Lower leg skin (tissue), 4 donors: ENCODE measurements at regions of chr9 and their contacts with region 1.

Region 1: GRCh38 chr9:98892288-98892687 is 51.4 kb upstream of the COL15A1 start:
- DNase-seq: no peak
- H3K4me3 ChIP-seq: no peak overlapping the region
- CTCF ChIP-seq: no peak
- POLR2A ChIP-seq: no peak

Region 2: GRCh38 chr9:98823666-98824334 is 68.5 kb before region 1 on chr9:
- intact Hi-C with region 1: loop called (anchors 2 kb)
- DNase-seq: peak in 1 of 2 donors; percentile 66
- H3K4me3 ChIP-seq: no peak overlapping the region
- CTCF ChIP-seq: no peak
- POLR2A ChIP-seq: no peak